Activated B cell treated with CpG ODN at 0.5 μM for 24 hours (primary cell): ENCODE measurements at regions of chr19 and their contacts with region 1.

Region 1: GRCh38 chr19:51346742-51347141 is 4.8 kb upstream of the VSIG10L start:
- DNase-seq: no peak
- ATAC-seq: no peak
- H3K4me3 Mint-ChIP-seq: no peak overlapping the region
- H3K27ac Mint-ChIP-seq: no peak overlapping the region
- H3K4me1 Mint-ChIP-seq: peaks cover 34% of the 10 kb centered on the region
- H3K27me3 Mint-ChIP-seq: no peaks in the 10 kb centered on the region
- CTCF ChIP-seq: no peak

Region 2: GRCh38 chr19:51357952-51358351 is 11.2 kb after region 1 on chr19:
- CTCF ChIA-PET with region 1: no interaction called
- POLR2A ChIA-PET with region 1: interaction called, 12 read pairs
- intact Hi-C with region 1: no loop called
- DNase-seq: no peak
- ATAC-seq: no peak
- H3K4me3 Mint-ChIP-seq: no peak overlapping the region
- H3K27ac Mint-ChIP-seq: no peak overlapping the region
- H3K4me1 Mint-ChIP-seq: peaks cover 9% of the 10 kb centered on the region
- H3K27me3 Mint-ChIP-seq: no peaks in the 10 kb centered on the region
- CTCF ChIP-seq: no peak